ENCODE measurements at regions of chr10 and their contacts with region 1.

Region 1: DNA sequence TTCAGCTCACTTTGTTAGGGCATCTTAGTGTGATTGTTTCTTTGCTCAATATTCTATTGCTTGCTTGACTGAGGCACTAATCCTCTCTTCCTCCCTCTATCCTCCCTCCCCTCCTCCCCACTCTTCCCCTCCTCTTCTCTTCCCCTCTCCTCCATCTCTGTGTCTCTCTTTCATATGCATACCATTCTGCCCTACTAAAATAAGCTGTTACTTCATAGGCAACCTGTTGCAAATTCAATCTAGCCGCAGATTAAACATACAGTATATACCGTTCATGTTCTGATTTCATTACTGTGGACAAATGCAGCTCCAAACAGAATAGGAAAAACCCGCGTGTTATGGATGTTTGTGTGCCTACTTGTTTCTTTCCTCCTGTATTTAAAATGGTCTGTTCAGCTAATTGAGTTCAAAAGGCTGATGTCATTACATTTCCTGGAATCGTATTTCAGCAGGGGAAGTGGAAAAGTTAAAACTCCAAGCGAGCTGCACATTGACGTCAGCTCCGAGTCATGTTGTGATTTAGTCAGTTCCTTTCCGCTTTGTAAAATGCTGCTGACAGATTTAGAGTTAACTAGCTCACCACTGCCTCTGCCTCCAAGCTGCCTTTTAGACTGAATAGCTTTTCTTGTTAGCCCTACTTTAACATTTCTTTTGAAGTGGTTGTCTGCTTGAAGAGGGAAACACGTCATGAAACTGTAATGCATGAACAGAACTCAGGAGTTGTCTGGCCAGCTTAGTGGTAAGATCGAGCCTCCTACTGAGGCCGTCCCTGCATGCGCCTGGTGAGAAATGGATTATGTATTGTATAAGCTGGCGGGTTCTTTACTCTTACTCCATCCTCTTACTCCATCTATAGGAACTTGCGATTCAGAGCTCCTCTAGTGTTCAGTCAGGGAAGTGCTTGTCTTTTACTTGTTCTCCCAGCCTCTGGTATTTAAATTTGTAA is 69.0 kb downstream of the CREM start:
- DNase-seq: peak; percentile 90
- ATAC-seq: peak; percentile 90
- H3K4me3 Mint-ChIP-seq: peak overlapping the region; percentile 85
- H3K27ac Mint-ChIP-seq: peak overlapping the region; percentile 100
- H3K4me1 Mint-ChIP-seq: peaks cover 61% of the 10 kb centered on the region
- H3K27me3 Mint-ChIP-seq: no peaks in the 10 kb centered on the region

Region 2: GRCh38 chr10:35119378-35119777 is 76.3 kb before region 1 on chr10:
- CTCF ChIA-PET with region 1: interaction called, 323 read pairs
- POLR2A ChIA-PET with region 1: interaction called, 29 read pairs
- DNase-seq: no peak
- ATAC-seq: no peak
- H3K4me3 Mint-ChIP-seq: no peak overlapping the region
- H3K27ac Mint-ChIP-seq: no peak overlapping the region
- H3K4me1 Mint-ChIP-seq: peaks cover 4% of the 10 kb centered on the region
- H3K27me3 Mint-ChIP-seq: peaks cover 3% of the 10 kb centered on the region

Region 3: DNA sequence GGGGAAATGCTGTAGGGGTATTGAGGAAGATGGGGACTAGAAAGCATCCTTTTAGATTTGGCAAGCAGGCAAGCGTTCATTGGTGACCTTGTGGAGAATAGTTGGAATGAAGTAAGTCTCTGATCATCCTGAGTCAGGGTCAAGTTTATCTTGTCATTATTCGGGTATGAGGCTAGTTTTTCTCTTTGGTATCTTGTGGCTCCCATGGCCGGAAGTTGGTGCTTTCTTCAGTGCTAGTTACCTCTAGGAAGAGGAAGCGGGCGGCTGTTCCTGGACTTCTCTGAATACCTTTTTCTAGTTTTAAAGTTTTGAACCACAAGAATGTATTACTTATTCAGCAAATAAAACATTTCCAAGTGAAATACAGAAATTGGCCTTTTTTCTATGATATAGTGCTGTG is 59.8 kb before region 1 on chr10:
- CTCF ChIA-PET with region 1: interaction called, 323 read pairs
- POLR2A ChIA-PET with region 1: interaction called, 201 read pairs
- DNase-seq: peak; percentile 38
- ATAC-seq: peak; percentile 28
- H3K4me3 Mint-ChIP-seq: peak overlapping the region; percentile 61
- H3K27ac Mint-ChIP-seq: peak overlapping the region; percentile 89
- H3K4me1 Mint-ChIP-seq: peaks cover 52% of the 10 kb centered on the region
- H3K27me3 Mint-ChIP-seq: no peaks in the 10 kb centered on the region

Region 4: DNA sequence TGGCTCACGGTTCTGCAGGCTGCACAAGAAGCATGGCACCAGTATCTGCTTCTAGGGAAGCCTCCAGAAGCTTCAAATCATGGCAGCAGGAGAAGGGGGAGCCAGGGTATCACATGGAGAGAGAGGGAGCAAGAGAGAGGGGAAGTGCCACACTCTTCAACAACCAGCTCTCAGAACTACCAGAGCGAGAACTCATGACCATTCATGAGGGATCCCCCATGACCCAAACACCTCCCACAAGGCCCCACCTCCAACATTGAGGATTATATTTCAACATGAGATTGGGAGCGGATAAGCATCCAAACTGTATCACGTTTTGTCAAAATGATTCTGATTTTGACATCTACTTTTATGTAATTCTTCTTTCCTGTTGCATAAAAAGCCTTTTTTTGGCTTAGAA is 30.5 kb before region 1 on chr10:
- CTCF ChIA-PET with region 1: interaction called, 12 read pairs
- POLR2A ChIA-PET with region 1: interaction called, 3 read pairs
- DNase-seq: no peak
- ATAC-seq: no peak
- H3K4me3 Mint-ChIP-seq: no peak overlapping the region
- H3K27ac Mint-ChIP-seq: no peak overlapping the region
- H3K4me1 Mint-ChIP-seq: peaks cover 6% of the 10 kb centered on the region
- H3K27me3 Mint-ChIP-seq: no peaks in the 10 kb centered on the region

Region 5: DNA sequence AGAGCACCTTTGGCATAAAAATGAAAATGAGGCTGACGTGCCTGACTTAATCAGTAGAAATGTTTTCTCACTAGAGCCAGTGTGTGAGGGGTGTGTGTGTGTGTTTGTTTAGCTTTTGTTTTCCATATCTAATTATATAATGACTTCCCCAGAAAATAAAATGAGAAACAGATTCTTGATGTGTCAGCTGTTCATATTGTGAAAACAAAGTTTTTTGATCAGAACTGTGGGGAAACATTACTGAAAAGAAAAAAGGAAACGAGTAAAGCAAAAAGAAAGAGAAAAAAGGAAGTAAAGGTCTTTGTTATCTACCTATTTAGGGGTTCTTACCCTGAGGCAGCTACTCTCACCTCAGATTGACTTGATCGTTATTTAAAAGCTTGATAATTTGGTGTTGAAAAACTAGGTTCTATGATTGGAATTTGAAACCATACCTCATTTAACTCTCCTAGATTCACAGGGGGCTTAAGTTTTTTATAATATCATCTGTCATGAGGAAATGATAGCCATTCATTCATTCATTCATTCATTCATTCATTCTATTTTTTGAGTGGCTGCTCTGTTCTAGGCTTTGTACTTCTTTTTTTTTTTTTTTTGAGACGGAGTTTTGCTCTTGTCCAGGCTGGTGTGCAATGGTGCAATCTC is 11.0 kb before region 1 on chr10:
- CTCF ChIA-PET with region 1: interaction called, 17 read pairs
- POLR2A ChIA-PET with region 1: interaction called, 8 read pairs
- DNase-seq: no peak
- ATAC-seq: no peak
- H3K4me3 Mint-ChIP-seq: no peak overlapping the region
- H3K27ac Mint-ChIP-seq: no peak overlapping the region
- H3K4me1 Mint-ChIP-seq: peaks cover 8% of the 10 kb centered on the region
- H3K27me3 Mint-ChIP-seq: no peaks in the 10 kb centered on the region

Region 6: GRCh38 chr10:35218339-35218955 is 22.8 kb after region 1 on chr10:
- CTCF ChIA-PET with region 1: interaction called, 109 read pairs
- POLR2A ChIA-PET with region 1: interaction called, 50 read pairs
- DNase-seq: peak; percentile 93
- ATAC-seq: peak; percentile 81
- H3K4me3 Mint-ChIP-seq: no peak overlapping the region
- H3K27ac Mint-ChIP-seq: peak overlapping the region; percentile 85
- H3K4me1 Mint-ChIP-seq: peaks cover 40% of the 10 kb centered on the region
- H3K27me3 Mint-ChIP-seq: no peaks in the 10 kb centered on the region

Region 7: DNA sequence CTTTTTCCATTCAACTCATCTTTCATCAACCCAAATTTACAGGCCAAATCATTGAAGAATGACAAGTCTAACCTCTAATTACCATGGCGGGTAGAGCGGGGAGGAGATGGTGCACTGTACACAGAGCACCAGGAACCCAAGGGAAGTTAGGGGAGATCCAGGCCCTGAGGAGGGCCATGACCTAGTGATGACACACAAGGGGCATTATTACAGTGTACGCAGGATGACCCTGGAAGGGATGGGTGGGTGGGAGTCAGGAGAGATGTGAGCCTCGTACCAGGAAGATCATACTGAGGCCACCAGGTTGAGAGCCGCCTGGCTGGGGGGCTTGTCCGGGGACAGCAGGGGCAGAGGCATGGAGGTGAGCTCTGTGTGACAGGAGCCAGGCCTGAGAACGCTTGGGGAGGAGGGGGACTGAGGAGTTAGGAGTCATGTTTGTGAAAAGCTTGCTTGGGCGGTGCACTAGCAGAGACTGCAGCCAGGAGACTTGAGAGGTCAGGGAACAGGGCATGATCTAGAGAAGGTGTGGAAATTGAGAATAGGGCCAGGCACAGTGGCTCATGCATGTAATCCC is 51.2 kb after region 1 on chr10:
- CTCF ChIA-PET with region 1: no interaction called
- POLR2A ChIA-PET with region 1: no interaction called
- DNase-seq: no peak
- ATAC-seq: no peak
- H3K4me3 Mint-ChIP-seq: no peak overlapping the region
- H3K27ac Mint-ChIP-seq: no peak overlapping the region
- H3K4me1 Mint-ChIP-seq: no peaks in the 10 kb centered on the region
- H3K27me3 Mint-ChIP-seq: no peaks in the 10 kb centered on the region

Region 8: DNA sequence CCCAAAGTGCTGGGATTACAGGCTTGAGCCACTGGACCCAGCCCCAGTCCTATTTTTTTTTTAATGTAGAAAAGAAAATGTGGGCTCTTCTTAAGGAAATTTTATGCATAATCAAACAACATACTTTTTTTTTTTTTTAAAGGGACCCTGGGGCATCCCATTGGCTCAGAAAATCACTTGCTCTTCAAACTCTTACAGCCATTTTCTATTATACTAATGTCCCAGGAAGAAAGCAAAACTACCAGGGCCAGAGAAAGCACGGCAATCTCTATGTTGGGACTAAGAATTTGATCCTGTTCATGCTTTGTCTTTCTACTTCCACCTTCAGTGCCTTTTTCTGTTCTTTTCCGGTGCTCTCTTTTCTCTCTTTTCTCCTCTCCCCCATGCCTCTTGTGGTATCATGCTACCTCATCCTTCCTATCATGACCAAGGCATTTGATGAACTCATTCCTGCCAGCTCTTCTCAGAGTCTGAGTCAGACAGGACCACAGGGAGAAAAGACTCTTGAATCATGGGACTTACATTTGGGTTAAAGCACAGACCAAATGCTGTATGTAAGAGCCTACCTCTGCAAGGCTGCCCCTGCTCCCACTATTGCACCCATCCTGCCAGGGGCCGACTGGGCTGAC is 64.2 kb after region 1 on chr10:
- CTCF ChIA-PET with region 1: no interaction called
- POLR2A ChIA-PET with region 1: no interaction called
- DNase-seq: no peak
- ATAC-seq: no peak
- H3K4me3 Mint-ChIP-seq: no peak overlapping the region
- H3K27ac Mint-ChIP-seq: no peak overlapping the region
- H3K4me1 Mint-ChIP-seq: no peaks in the 10 kb centered on the region
- H3K27me3 Mint-ChIP-seq: peaks cover 5% of the 10 kb centered on the region

Region 9: DNA sequence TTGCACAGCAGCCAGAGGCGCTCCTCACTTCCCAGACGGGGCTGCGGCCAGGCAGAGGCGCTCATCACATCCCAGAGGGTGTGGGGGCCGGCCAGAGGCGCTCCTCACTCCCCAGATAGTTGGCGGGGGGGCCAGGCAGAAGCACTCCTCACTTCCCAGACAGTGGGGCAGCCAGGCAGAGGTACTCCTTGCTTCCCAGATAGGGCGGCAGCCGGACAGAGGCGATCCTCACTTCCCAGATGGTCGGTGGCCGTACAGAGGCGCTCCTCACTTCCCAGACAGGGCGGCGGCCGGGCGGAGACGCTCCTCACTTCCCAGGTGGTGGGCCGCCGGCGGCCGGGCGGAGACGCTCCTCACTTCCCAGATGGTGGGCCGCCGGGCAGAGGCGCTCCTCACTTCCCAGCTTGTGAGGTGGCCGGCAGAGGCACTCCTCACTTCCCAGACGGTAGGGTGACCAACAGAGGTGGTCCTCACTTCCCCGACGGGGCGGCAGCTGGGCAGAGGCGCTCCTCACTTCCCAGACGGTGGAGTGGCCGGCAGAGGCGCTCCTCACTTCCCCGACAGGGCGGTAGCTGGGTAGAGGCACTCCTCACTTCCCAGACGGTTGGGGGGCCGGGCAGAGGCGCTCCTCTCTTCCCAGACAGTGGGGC is 167.2 kb after region 1 on chr10:
- CTCF ChIA-PET with region 1: no interaction called
- POLR2A ChIA-PET with region 1: no interaction called
- DNase-seq: no peak
- ATAC-seq: no peak
- H3K4me3 Mint-ChIP-seq: no peak overlapping the region
- H3K27ac Mint-ChIP-seq: no peak overlapping the region
- H3K4me1 Mint-ChIP-seq: peaks cover 7% of the 10 kb centered on the region
- H3K27me3 Mint-ChIP-seq: no peaks in the 10 kb centered on the region

Measured in activated CD8-positive, alpha-beta T cell treated with anti-CD3 and anti-CD28 coated beads, Interleukin-2, amount 10 ng/mL, durations not matched to agents 7 days and 5 days (primary cell).